CD4-positive, alpha-beta memory T cell (primary cell): ENCODE measurements at regions of chr2 and their contacts with region 1.

Region 1: GRCh38 chr2:218269899-218270720 is at the starts of genes AAMP and PNKD:
- DNase-seq: peak; percentile 100
- H3K4me3 ChIP-seq: peak within 1 kb of the TSS; percentile 80 to 91
- H3K4me3 Mint-ChIP-seq: peak within 1 kb of the TSS; percentile 87 to 96 (median 94)
- H3K27ac ChIP-seq: peak within 1 kb of the TSS; percentile 84
- H3K27ac Mint-ChIP-seq: peak within 1 kb of the TSS; percentile 92 to 96 (median 93)
- H3K4me1 ChIP-seq: peaks cover 34% of the 10 kb centered on the region
- H3K4me1 Mint-ChIP-seq: peaks cover 34 to 60% (median 48%) of the 10 kb centered on the region in 4 donors
- H3K27me3 ChIP-seq: no peaks in the 10 kb centered on the region
- H3K27me3 Mint-ChIP-seq: no peaks in the 10 kb centered on the region
- total RNA-seq, gene AAMP: 66.2 to 66.3 TPM
- total RNA-seq, gene PNKD: 31.1 to 33.6 TPM

Region 2: GRCh38 chr2:218186355-218186766 is 83.7 kb before region 1 on chr2:
- CTCF ChIA-PET with region 1: interaction called, 14 read pairs
- POLR2A ChIA-PET with region 1: no interaction called
- intact Hi-C with region 1: loop called (anchors 1 kb)
- DNase-seq: peak; percentile 68 to 79 (median 73)
- H3K4me3 ChIP-seq: no peak overlapping the region
- H3K4me3 Mint-ChIP-seq: peak overlapping the region in 1 of 8 donors; percentile 3
- H3K27ac ChIP-seq: no peak overlapping the region
- H3K27ac Mint-ChIP-seq: peak overlapping the region in 2 of 7 donors; percentile 24 to 44
- H3K4me1 ChIP-seq: peaks cover 8% of the 10 kb centered on the region
- H3K4me1 Mint-ChIP-seq: peaks cover 5 to 8% (median 7%) of the 10 kb centered on the region in 4 donors
- H3K27me3 ChIP-seq: no peaks in the 10 kb centered on the region
- H3K27me3 Mint-ChIP-seq: peaks cover 0 to 1% of the 10 kb centered on the region in 2 donors

Region 3: GRCh38 chr2:218257390-218257981 is 12.6 kb before region 1 on chr2:
- CTCF ChIA-PET with region 1: interaction called, 21 read pairs
- POLR2A ChIA-PET with region 1: interaction called, 17 read pairs
- intact Hi-C with region 1: no loop called
- DNase-seq: peak; percentile 64 to 73 (median 68)
- H3K4me3 ChIP-seq: no peak overlapping the region
- H3K4me3 Mint-ChIP-seq: peak overlapping the region in 7 of 8 donors; percentile 42 to 83 (median 72)
- H3K27ac ChIP-seq: peak overlapping the region; percentile 58
- H3K27ac Mint-ChIP-seq: peak overlapping the region; percentile 64 to 96 (median 88)
- H3K4me1 ChIP-seq: peaks cover 10% of the 10 kb centered on the region
- H3K4me1 Mint-ChIP-seq: peaks cover 7 to 18% (median 13%) of the 10 kb centered on the region in 4 donors
- H3K27me3 ChIP-seq: no peaks in the 10 kb centered on the region
- H3K27me3 Mint-ChIP-seq: no peaks in the 10 kb centered on the region

Region 4: GRCh38 chr2:218360447-218360846 is 90.3 kb after region 1 on chr2:
- CTCF ChIA-PET with region 1: interaction called, 144 read pairs
- POLR2A ChIA-PET with region 1: interaction called, 8 read pairs
- intact Hi-C with region 1: loop called (anchors 1 kb)
- DNase-seq: no peak
- H3K4me3 ChIP-seq: no peak overlapping the region
- H3K4me3 Mint-ChIP-seq: no peak overlapping the region
- H3K27ac ChIP-seq: no peak overlapping the region
- H3K27ac Mint-ChIP-seq: no peak overlapping the region
- H3K4me1 ChIP-seq: peaks cover 6% of the 10 kb centered on the region
- H3K4me1 Mint-ChIP-seq: peaks cover 0 to 4% (median 2%) of the 10 kb centered on the region in 4 donors
- H3K27me3 ChIP-seq: no peaks in the 10 kb centered on the region
- H3K27me3 Mint-ChIP-seq: no peaks in the 10 kb centered on the region

Region 5: GRCh38 chr2:218438601-218438995 is 168.5 kb after region 1 on chr2:
- CTCF ChIA-PET with region 1: no interaction called
- POLR2A ChIA-PET with region 1: no interaction called
- intact Hi-C with region 1: no loop called
- DNase-seq: no peak
- H3K4me3 ChIP-seq: no peak overlapping the region
- H3K4me3 Mint-ChIP-seq: no peak overlapping the region
- H3K27ac ChIP-seq: no peak overlapping the region
- H3K27ac Mint-ChIP-seq: peak overlapping the region in 2 of 7 donors; percentile 64 to 68
- H3K4me1 ChIP-seq: no peaks in the 10 kb centered on the region
- H3K4me1 Mint-ChIP-seq: peaks cover 0 to 2% (median under 1%) of the 10 kb centered on the region in 4 donors
- H3K27me3 ChIP-seq: no peaks in the 10 kb centered on the region
- H3K27me3 Mint-ChIP-seq: no peaks in the 10 kb centered on the region

Region 6: GRCh38 chr2:218466016-218466521 is 196.0 kb after region 1 on chr2:
- CTCF ChIA-PET with region 1: interaction called, 17 read pairs
- POLR2A ChIA-PET with region 1: no interaction called
- intact Hi-C with region 1: loop called (anchors 1 kb)
- DNase-seq: peak in 4 of 5 donors; percentile 11 to 15 (median 14)
- H3K4me3 ChIP-seq: no peak overlapping the region
- H3K4me3 Mint-ChIP-seq: no peak overlapping the region
- H3K27ac ChIP-seq: no peak overlapping the region
- H3K27ac Mint-ChIP-seq: peak overlapping the region in 6 of 7 donors; percentile 20 to 78 (median 47)
- H3K4me1 ChIP-seq: peaks cover 7% of the 10 kb centered on the region
- H3K4me1 Mint-ChIP-seq: peaks cover 6 to 12% (median 8%) of the 10 kb centered on the region in 4 donors
- H3K27me3 ChIP-seq: no peaks in the 10 kb centered on the region
- H3K27me3 Mint-ChIP-seq: no peaks in the 10 kb centered on the region

Region 7: DNA sequence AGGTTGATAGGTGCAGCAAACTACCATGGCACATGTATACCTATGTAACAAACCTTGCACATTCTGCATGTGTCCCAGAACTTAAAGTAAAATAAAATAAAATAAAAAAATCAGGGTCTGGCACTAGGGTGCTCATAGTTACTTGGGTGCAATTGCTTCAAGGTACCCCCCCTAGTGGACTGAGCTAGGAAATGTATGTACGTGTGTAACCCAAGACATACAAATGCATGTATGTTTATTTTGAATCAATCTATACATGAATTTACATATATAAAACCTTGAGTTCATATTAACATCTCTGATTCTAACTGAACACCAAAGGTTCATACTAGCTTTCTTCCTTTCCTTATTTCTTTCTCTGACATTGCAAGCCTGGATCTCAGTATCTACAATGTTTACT is 246.5 kb after region 1 on chr2:
- CTCF ChIA-PET with region 1: no interaction called
- POLR2A ChIA-PET with region 1: no interaction called
- intact Hi-C with region 1: no loop called
- DNase-seq: peak; percentile 20 to 37 (median 28)
- H3K4me3 ChIP-seq: no peak overlapping the region
- H3K4me3 Mint-ChIP-seq: no peak overlapping the region
- H3K27ac ChIP-seq: no peak overlapping the region
- H3K27ac Mint-ChIP-seq: peak overlapping the region in 2 of 7 donors; percentile 8 to 57
- H3K4me1 ChIP-seq: no peaks in the 10 kb centered on the region
- H3K4me1 Mint-ChIP-seq: peaks cover 0 to 26% (median 10%) of the 10 kb centered on the region in 4 donors
- H3K27me3 ChIP-seq: no peaks in the 10 kb centered on the region
- H3K27me3 Mint-ChIP-seq: no peaks in the 10 kb centered on the region

Region 8: DNA sequence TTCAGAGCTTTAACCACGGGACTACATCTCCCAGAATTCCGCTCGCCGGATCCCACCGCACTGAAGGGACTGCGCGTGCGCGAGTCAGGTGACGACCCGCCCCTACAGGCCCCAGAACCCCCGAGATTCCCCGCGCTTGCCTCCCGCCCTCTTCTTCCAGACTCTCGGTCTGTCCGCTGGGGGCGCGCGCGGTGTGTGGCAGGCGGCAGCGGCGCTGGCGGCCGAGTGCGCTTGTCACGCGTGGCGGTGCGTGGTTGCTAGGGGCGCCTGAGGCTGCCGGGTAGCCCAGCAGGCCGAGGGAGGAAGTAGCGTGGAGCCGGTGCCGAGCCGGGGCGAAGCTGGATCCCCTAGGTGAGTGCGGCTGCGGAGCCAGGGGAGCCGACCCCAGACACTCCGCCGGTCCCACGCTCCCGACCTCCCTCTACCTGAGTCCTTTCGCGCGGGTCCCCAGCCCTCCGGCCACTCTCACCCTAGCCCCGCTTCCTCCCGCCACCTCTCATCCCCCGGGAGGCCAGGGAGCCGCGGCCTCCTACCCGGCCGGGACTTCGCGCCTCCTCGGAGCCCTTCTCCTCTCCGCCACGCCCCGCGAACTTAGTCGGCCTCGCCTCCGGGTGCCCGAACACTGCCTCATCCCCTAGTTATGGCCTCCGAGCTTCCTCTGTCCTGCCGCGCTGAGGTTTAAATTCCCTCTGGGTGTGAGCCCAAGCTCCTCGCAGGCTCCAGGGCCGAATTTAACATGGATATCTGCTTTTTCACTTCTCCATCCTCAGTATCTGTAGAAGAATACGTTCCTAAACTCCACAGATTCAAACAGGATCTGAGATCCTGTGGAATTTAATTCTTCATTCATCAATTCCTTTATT is 440.8 kb after region 1 on chr2 and contains the start of gene TTLL4:
- CTCF ChIA-PET with region 1: no interaction called
- POLR2A ChIA-PET with region 1: no interaction called
- intact Hi-C with region 1: loop called (anchors 1 kb)
- DNase-seq: peak; percentile 98 to 99 (median 99)
- H3K4me3 ChIP-seq: peak within 1 kb of the TSS; percentile 55 to 78
- H3K4me3 Mint-ChIP-seq: peak within 1 kb of the TSS; percentile 88 to 98 (median 95)
- H3K27ac ChIP-seq: peak within 1 kb of the TSS; percentile 81
- H3K27ac Mint-ChIP-seq: peak within 1 kb of the TSS; percentile 79 to 96 (median 93)
- H3K4me1 ChIP-seq: peaks cover 16% of the 10 kb centered on the region
- H3K4me1 Mint-ChIP-seq: peaks cover 14 to 26% (median 18%) of the 10 kb centered on the region in 4 donors
- H3K27me3 ChIP-seq: no peaks in the 10 kb centered on the region
- H3K27me3 Mint-ChIP-seq: peaks cover 0 to under 1% of the 10 kb centered on the region in 2 donors
- total RNA-seq, gene TTLL4: 23.1 to 26.1 TPM